CD4-positive, alpha-beta T cell (primary cell): ENCODE measurements at regions of chr22 and their contacts with region 1.

Region 1: GRCh38 chr22:19896665-19897355 is 42.1 kb upstream of the GNB1L start:
- DNase-seq: peak in 11 of 14 experiments; percentile 24 to 73 (median 48)
- ATAC-seq: peak; percentile 24
- H3K4me3 ChIP-seq: no peak overlapping the region
- H3K4me3 Mint-ChIP-seq: peak overlapping the region; percentile 45
- H3K27ac ChIP-seq: no peak overlapping the region
- H3K27ac Mint-ChIP-seq: peak overlapping the region; percentile 97
- H3K4me1 ChIP-seq: peaks cover 59% of the 10 kb centered on the region
- H3K4me1 Mint-ChIP-seq: peaks cover 53% of the 10 kb centered on the region
- H3K27me3 ChIP-seq: no peaks in the 10 kb centered on the region
- H3K27me3 Mint-ChIP-seq: no peaks in the 10 kb centered on the region
- CTCF ChIP-seq: peak; percentile 34

Region 2: GRCh38 chr22:19941365-19942082 is 44.7 kb after region 1 on chr22 and contains the starts of genes COMT and TXNRD2:
- CTCF ChIA-PET with region 1: no interaction called
- POLR2A ChIA-PET with region 1: interaction called, 4 read pairs
- intact Hi-C with region 1: loop called in 1 of 2 experiments (anchors 2 kb)
- DNase-seq: peak; percentile 56 to 83 (median 68)
- ATAC-seq: peak; percentile 84
- H3K4me3 ChIP-seq: peak within 1 kb of the TSS; percentile 83
- H3K4me3 Mint-ChIP-seq: peak within 1 kb of the TSS; percentile 97
- H3K27ac ChIP-seq: peak within 1 kb of the TSS; percentile 47 to 62
- H3K27ac Mint-ChIP-seq: peak within 1 kb of the TSS; percentile 92
- H3K4me1 ChIP-seq: peaks cover 34% of the 10 kb centered on the region
- H3K4me1 Mint-ChIP-seq: peaks cover 42% of the 10 kb centered on the region
- H3K27me3 ChIP-seq: no peaks in the 10 kb centered on the region
- H3K27me3 Mint-ChIP-seq: no peaks in the 10 kb centered on the region
- CTCF ChIP-seq: no peak
- total RNA-seq, gene COMT: 11.3 to 11.4 TPM
- total RNA-seq, gene TXNRD2: 18.6 to 19.5 TPM

Region 3: DNA sequence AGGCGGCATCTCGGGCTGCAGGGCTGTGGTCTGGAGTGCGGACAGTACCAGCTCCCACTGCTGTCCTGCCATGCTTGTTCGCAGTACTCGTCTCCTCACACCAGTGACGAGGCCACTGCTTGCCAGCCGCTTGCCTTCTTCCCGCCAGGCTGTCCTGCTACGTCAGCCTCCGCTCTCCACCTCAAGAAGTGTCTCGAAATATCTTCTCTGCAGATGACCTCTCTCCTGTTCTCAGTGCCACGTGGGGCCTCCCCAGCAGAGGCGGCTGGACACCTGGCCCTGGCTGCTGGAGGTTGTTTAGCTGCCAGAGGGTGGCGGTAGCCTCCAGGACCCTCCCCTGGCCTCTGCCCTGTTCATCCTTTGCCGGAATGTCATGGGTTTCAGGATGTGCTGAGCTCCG is 257.1 kb after region 1 on chr22:
- CTCF ChIA-PET with region 1: no interaction called
- POLR2A ChIA-PET with region 1: no interaction called
- intact Hi-C with region 1: no loop called
- DNase-seq: no peak
- ATAC-seq: no peak
- H3K4me3 ChIP-seq: no peak overlapping the region
- H3K4me3 Mint-ChIP-seq: no peak overlapping the region
- H3K27ac ChIP-seq: no peak overlapping the region
- H3K27ac Mint-ChIP-seq: no peak overlapping the region
- H3K4me1 ChIP-seq: peaks cover 21% of the 10 kb centered on the region
- H3K4me1 Mint-ChIP-seq: peaks cover 4% of the 10 kb centered on the region
- H3K27me3 ChIP-seq: peaks cover 4 to 6% of the 10 kb centered on the region in 2 experiments
- H3K27me3 Mint-ChIP-seq: peaks cover 5% of the 10 kb centered on the region
- CTCF ChIP-seq: no peak